CD4-positive, alpha-beta memory T cell (primary cell): ENCODE measurements at regions of chr22 and their contacts with region 1.

Region 1: DNA sequence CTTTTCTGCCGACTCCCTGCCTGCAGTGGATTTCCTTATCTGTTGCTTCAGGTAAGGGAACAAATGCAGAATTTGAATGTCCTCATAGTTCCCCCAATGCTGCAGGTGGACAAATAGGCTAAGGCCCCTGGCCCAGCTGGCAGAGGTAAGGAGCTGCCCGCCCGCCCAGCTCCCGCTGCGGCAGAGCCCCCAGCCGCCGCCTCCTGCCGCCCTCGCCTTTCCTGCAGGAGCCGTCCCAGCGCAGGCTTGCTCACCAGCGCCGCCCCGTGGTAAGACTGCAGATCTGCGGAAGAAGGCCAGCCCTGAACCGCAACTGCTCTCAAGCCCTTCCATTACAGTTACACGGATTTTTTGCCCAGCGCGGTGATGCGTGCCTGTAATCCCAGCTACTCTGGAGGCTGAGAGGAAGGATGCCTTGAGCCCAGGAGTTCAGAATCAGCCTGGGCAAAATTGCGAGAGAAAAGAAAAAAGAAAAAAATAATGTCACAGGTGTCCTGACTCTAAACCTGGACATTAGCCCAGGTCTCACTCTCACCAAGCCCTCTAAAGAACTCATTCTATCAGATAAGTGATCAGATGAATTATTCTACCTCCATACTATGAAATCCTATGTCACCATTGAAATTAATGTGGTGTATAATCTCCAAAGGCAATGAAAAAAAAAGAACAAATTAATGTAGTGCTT is 51.2 kb upstream of the EMID1 start:
- DNase-seq: peak in 4 of 5 donors; percentile 33 to 53 (median 42)
- H3K4me3 ChIP-seq: no peak overlapping the region
- H3K4me3 Mint-ChIP-seq: peak overlapping the region in 3 of 8 donors; percentile 5 to 59 (median 55)
- H3K27ac ChIP-seq: no peak overlapping the region
- H3K27ac Mint-ChIP-seq: no peak overlapping the region
- H3K4me1 ChIP-seq: peaks cover 10% of the 10 kb centered on the region
- H3K4me1 Mint-ChIP-seq: peaks cover 4 to 7% (median 6%) of the 10 kb centered on the region in 4 donors
- H3K27me3 ChIP-seq: no peaks in the 10 kb centered on the region
- H3K27me3 Mint-ChIP-seq: peaks cover 9 to 22% of the 10 kb centered on the region in 2 donors

Region 2: GRCh38 chr22:28594797-28595462 is 559.6 kb before region 1 on chr22:
- CTCF ChIA-PET with region 1: interaction called, 6 read pairs
- POLR2A ChIA-PET with region 1: no interaction called
- intact Hi-C with region 1: loop called (anchors 10 kb)
- DNase-seq: peak in 4 of 5 donors; percentile 13 to 45 (median 32)
- H3K4me3 ChIP-seq: no peak overlapping the region
- H3K4me3 Mint-ChIP-seq: no peak overlapping the region
- H3K27ac ChIP-seq: no peak overlapping the region
- H3K27ac Mint-ChIP-seq: no peak overlapping the region
- H3K4me1 ChIP-seq: no peaks in the 10 kb centered on the region
- H3K4me1 Mint-ChIP-seq: no peaks in the 10 kb centered on the region
- H3K27me3 ChIP-seq: peaks cover 7% of the 10 kb centered on the region
- H3K27me3 Mint-ChIP-seq: peaks cover 5 to 7% of the 10 kb centered on the region in 2 donors

Region 3: GRCh38 chr22:29108109-29108508 is 46.4 kb before region 1 on chr22:
- CTCF ChIA-PET with region 1: no interaction called
- POLR2A ChIA-PET with region 1: no interaction called
- intact Hi-C with region 1: no loop called
- DNase-seq: no peak
- H3K4me3 ChIP-seq: no peak overlapping the region
- H3K4me3 Mint-ChIP-seq: no peak overlapping the region
- H3K27ac ChIP-seq: no peak overlapping the region
- H3K27ac Mint-ChIP-seq: no peak overlapping the region
- H3K4me1 ChIP-seq: no peaks in the 10 kb centered on the region
- H3K4me1 Mint-ChIP-seq: no peaks in the 10 kb centered on the region
- H3K27me3 ChIP-seq: no peaks in the 10 kb centered on the region
- H3K27me3 Mint-ChIP-seq: peaks cover 10 to 19% of the 10 kb centered on the region in 2 donors

Region 4: DNA sequence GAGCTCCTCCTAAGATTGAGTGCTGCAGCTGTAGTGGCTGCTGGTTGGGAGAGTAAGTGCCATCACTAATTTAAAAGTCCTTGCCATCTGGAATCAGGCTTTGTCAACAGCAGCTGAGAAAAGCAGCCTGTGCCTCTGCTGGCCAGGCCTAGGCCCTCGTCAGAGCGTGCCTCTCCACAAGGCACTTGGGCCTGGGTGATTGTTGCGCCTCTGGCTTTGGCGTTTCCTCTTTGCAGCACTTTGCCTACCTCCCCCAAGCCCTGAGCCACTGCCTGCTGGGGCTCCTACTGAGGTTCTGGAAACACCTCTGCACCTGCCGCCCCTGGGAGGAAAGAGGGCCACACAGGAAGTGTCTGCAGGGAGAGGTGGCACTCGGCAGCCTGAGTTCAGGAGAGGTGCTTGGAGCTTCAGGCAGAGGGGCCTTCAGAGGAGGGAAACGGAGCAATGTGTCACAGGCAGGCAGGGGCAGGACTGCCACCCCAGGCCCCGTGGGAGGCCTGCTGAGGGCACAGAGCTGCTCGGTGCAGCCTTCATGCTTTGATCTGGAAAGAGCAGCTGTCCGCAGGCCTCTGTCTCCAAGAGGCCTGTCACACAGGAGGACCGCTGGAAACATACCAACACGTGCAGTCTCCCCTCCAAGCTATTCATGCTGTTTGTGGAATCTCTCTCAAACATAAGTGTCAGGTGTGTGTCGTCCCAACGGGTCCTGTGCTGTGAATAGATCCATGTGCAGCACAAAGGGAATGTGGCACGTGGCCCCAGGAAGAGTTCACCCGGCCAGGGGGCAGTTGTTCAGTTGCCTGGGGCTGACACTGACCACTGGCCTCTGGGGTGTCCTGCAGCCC is 10.3 kb before region 1 on chr22:
- CTCF ChIA-PET with region 1: interaction called, 14 read pairs
- POLR2A ChIA-PET with region 1: no interaction called
- intact Hi-C with region 1: no loop called
- DNase-seq: no peak
- H3K4me3 ChIP-seq: no peak overlapping the region
- H3K4me3 Mint-ChIP-seq: no peak overlapping the region
- H3K27ac ChIP-seq: no peak overlapping the region
- H3K27ac Mint-ChIP-seq: no peak overlapping the region
- H3K4me1 ChIP-seq: no peaks in the 10 kb centered on the region
- H3K4me1 Mint-ChIP-seq: no peaks in the 10 kb centered on the region
- H3K27me3 ChIP-seq: no peaks in the 10 kb centered on the region
- H3K27me3 Mint-ChIP-seq: peaks cover 0 to 4% of the 10 kb centered on the region in 2 donors

Region 5: GRCh38 chr22:29830585-29830984 is 676.1 kb after region 1 on chr22:
- CTCF ChIA-PET with region 1: no interaction called
- POLR2A ChIA-PET with region 1: no interaction called
- intact Hi-C with region 1: no loop called
- DNase-seq: no peak
- H3K4me3 ChIP-seq: no peak overlapping the region
- H3K4me3 Mint-ChIP-seq: no peak overlapping the region
- H3K27ac ChIP-seq: no peak overlapping the region
- H3K27ac Mint-ChIP-seq: peak overlapping the region in 2 of 7 donors; percentile 10 to 52
- H3K4me1 ChIP-seq: peaks cover 3% of the 10 kb centered on the region
- H3K4me1 Mint-ChIP-seq: peaks cover 9 to 29% (median 14%) of the 10 kb centered on the region in 4 donors
- H3K27me3 ChIP-seq: no peaks in the 10 kb centered on the region
- H3K27me3 Mint-ChIP-seq: no peaks in the 10 kb centered on the region